Right cardiac atrium (tissue), 5 donors: ENCODE measurements at regions of chr4 and their contacts with region 1.

Region 1: GRCh38 chr4:1346781-1347409 is at the start of gene UVSSA:
- DNase-seq: peak; percentile 100
- ATAC-seq: peak; percentile 96 to 97
- H3K4me3 ChIP-seq: peak within 1 kb of the TSS; percentile 74
- H3K27ac ChIP-seq: peak within 1 kb of the TSS; percentile 65
- H3K4me1 ChIP-seq: no peaks in the 10 kb centered on the region
- H3K27me3 ChIP-seq: no peaks in the 10 kb centered on the region
- total RNA-seq, gene UVSSA: 7.7 to 8.8 (median 8.5) TPM

Region 2: GRCh38 chr4:1130316-1131186 is 216.3 kb before region 1 on chr4:
- intact Hi-C with region 1: loop called in 3 of 4 experiments (anchors 2 to 10 kb)
- DNase-seq: peak; percentile 62 to 85 (median 82)
- ATAC-seq: peak; percentile 93 to 96
- H3K4me3 ChIP-seq: no peak overlapping the region
- H3K27ac ChIP-seq: no peak overlapping the region
- H3K4me1 ChIP-seq: no peaks in the 10 kb centered on the region
- H3K27me3 ChIP-seq: no peaks in the 10 kb centered on the region

Region 3: GRCh38 chr4:1167247-1167949 is 179.5 kb before region 1 on chr4:
- intact Hi-C with region 1: loop called in 1 of 4 experiments (anchors 10 kb)
- DNase-seq: peak; percentile 82 to 93 (median 92)
- ATAC-seq: peak; percentile 84 to 87
- H3K4me3 ChIP-seq: peak overlapping the region; percentile 27
- H3K27ac ChIP-seq: no peak overlapping the region
- H3K4me1 ChIP-seq: no peaks in the 10 kb centered on the region
- H3K27me3 ChIP-seq: no peaks in the 10 kb centered on the region

Region 4: GRCh38 chr4:1243451-1244080 is 103.3 kb before region 1 on chr4:
- intact Hi-C with region 1: loop called in 3 of 4 experiments (anchors 2 to 5 kb)
- DNase-seq: peak in 2 of 3 donors; percentile 37 to 49
- ATAC-seq: no peak
- H3K4me3 ChIP-seq: no peak overlapping the region
- H3K27ac ChIP-seq: no peak overlapping the region
- H3K4me1 ChIP-seq: peaks cover 28% of the 10 kb centered on the region
- H3K27me3 ChIP-seq: no peaks in the 10 kb centered on the region

Region 5: DNA sequence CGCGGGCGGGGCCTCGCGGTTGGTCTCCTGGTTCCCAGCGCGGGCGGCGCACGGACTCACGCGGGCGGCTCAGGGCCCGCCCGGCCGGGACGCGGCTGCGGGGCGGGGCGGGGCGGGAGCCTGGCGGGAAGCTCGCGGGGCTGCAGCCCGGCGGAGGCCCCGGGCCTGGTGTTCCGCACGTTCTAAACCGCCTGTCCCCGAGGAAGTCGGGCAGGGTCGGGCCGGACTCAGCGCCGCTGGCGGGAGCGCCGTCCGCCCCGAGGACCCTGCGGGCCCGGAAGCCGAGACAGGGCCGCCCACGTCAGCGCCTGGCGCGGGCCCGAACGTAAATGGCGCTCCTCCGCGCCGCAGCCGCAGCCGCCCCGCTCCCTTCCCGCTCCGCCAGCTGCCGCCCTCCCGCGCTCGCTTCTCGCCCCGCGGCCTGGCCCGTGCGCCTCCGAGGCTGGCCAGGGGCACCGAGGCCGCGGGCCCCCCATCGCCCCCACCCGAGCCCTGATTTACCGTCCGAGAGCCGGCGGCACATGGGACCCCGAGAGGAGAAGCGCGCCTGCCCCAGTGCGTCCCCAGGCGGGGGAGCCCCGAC is 97.7 kb before region 1 on chr4:
- intact Hi-C with region 1: loop called (anchors 2 to 5 kb)
- DNase-seq: peak; percentile 89 to 96 (median 95)
- ATAC-seq: peak; percentile 63 to 73
- H3K4me3 ChIP-seq: peak overlapping the region; percentile 93
- H3K27ac ChIP-seq: peak overlapping the region; percentile 88
- H3K4me1 ChIP-seq: peaks cover 21% of the 10 kb centered on the region
- H3K27me3 ChIP-seq: no peaks in the 10 kb centered on the region

Region 6: DNA sequence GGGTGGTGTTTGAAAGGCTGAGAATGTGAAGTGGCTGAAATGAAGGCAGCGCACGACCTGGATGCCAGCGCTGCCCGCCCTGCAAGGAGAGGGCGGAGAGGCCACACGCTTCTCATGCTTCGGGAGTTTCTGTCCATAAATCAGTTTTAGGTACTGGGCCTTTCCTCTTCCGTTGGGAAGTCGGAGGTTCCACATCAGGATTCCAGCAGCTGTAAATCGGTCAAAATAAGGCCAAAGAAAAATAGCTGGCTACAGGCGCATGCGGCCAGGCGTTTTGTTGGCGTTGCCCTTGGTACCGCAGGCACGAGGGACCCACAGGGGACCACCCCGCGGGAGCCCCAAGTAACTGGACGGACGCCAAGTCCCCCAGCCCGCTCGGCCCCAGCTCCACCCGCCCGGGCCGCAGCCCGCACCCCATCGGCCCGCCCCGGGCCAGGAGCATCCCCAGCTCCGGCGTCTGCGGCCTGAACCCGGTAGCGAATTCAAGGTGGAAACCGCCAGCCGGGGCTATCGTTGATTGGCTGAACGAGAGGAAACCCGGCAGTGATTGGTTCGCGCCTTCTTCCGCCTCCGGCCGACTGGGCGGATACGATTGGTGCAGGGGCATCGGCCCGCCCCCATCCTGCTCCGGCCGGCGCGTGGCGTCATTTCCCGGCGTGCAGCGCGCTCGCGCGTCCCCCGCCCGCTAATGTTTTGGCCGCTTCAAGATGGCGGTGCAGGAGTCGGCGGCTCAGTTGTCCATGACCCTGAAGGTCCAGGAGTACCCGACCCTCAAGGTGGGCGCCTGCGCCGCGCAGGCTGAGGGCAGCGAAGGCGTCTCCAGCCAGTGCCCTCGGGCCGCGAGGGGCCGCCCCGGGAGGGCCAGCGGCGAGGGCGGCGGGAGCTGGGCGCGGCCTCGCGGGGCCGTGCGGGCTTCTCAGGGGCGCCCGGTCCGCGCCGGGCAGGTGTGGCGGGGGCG is 57.4 kb before region 1 on chr4 and contains the start of gene MAEA:
- intact Hi-C with region 1: loop called in 2 of 4 experiments (anchors 10 kb)
- DNase-seq: peak; percentile 98 to 99 (median 99)
- ATAC-seq: peak; percentile 98 to 99
- H3K4me3 ChIP-seq: peak within 1 kb of the TSS; percentile 84
- H3K27ac ChIP-seq: peak within 1 kb of the TSS; percentile 89
- H3K4me1 ChIP-seq: peaks cover 12% of the 10 kb centered on the region
- H3K27me3 ChIP-seq: no peaks in the 10 kb centered on the region
- total RNA-seq, gene MAEA: 51.6 to 61.8 (median 59.2) TPM